Head of caudate nucleus (tissue), 42 donors: ENCODE measurements at regions of chr11 and their contacts with region 1.

Region 1: GRCh38 chr11:66616379-66617154 is at the start of gene RBM14:
- DNase-seq: peak; percentile 96 to 100 (median 99)

Region 2: DNA sequence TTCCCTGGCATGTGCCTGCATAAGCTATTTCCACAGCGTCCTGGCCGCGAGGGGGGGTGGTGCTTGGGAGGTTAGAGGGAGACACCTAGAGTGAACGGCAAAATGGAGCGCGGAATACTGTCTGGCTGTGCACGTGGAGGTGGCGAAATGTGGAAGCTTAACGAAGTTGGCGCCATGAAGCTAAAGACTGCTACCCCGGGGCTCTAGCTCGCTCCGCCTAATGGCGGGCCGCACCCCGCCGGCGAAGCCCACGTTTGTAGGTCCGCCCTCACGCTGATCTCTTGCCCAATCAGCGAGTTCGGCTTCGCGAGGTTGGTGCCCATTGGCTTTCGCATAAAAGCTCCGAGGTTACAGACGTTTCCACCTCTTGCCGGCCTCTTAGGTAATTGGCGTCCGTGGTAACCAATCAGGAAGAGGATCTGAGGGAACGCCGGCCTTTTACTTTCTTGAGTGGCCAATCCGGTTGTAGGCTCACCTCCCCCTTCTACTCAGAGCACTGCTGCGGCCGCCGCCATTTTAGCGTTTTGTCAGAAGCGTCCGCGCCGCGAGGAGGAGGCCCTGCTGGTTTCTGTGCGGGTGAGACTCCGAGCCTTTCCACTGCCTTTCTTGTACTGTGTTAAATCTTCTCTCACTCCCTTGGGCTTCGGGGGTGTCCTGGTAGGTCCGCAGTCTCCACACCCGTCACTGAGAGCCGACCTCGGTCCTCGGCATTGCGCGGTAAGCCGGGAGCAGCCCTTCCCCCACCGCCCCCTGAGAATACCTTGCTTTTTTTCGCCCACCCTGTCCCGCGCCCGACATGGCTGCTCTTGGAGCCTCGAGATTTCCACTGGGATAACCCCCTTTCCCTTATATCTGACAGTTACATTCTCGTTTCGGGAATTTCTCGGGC is 21.9 kb after region 1 on chr11 and contains the start of gene RBM4:
- intact Hi-C with region 1: loop called (anchors 2 kb)
- DNase-seq: peak; percentile 96 to 100 (median 99)